Gastrocnemius medialis (tissue), 4 donors: ENCODE measurements at regions of chr14 and their contacts with region 1.

Region 1: DNA sequence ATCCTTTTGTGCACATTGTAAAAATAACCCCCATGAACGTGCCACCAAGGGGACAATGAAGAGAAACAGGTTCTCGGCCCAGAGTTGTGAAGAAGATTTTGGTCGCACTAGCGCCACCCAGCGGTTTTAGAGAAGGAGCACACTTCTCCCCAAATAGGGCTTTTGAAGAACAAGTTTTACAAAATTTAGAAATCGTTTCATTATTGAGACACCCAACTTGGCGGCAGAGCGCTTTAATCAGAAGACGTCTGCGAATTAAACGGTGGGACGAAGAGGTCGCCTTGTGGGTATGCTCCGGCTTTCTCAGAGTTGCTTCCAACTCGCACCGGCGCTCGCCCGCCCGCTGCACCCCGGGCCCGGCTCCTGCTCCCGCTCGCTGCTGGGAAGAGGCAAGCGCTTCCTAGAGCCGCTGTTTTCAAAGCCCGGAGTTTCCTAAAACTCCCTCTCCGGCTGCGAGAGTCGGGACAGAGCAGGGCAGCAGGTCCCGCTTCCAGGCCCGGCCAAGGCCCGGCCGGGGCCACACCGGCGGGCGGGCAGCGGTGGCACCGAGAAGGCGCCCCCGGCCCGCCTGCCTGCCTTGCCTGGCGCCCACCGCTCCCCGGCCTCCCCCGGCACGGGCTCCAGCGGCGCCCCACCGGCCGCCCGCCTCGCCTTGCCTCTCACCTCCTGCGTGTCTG is 673 bp downstream of the FOXA1 start:
- DNase-seq: no peak
- ATAC-seq: peak in 1 of 2 donors; percentile 49
- H3K4me3 ChIP-seq: peak overlapping the region; percentile 19 to 42 (median 26)
- H3K27ac ChIP-seq: no peak overlapping the region
- H3K4me1 ChIP-seq: peaks cover 15 to 24% of the 10 kb centered on the region in 2 donors
- H3K27me3 ChIP-seq: peaks cover 97 to 98% (median 97%) of the 10 kb centered on the region in 3 donors
- CTCF ChIP-seq: peak in 3 of 5 experiments; percentile 35 to 51 (median 37)
- POLR2A ChIP-seq: no peak

Region 2: GRCh38 chr14:36493761-36494160 is 1100.6 kb before region 1 on chr14:
- in situ Hi-C with region 1: no loop called
- intact Hi-C with region 1: loop called (anchors 10 kb)
- DNase-seq: no peak
- ATAC-seq: no peak
- H3K4me3 ChIP-seq: no peak overlapping the region
- H3K27ac ChIP-seq: no peak overlapping the region
- H3K4me1 ChIP-seq: no peaks in the 10 kb centered on the region
- H3K27me3 ChIP-seq: peaks cover 58 to 70% (median 61%) of the 10 kb centered on the region in 3 donors
- CTCF ChIP-seq: no peak
- POLR2A ChIP-seq: no peak

Region 3: GRCh38 chr14:36520601-36521525 is 1073.5 kb before region 1 on chr14:
- in situ Hi-C with region 1: loop called in 1 of 4 experiments (anchors 25 kb)
- intact Hi-C with region 1: no loop called
- DNase-seq: no peak
- ATAC-seq: no peak
- H3K4me3 ChIP-seq: peak overlapping the region; percentile 21 to 57 (median 34)
- H3K27ac ChIP-seq: no peak overlapping the region
- H3K4me1 ChIP-seq: peaks cover 20 to 40% of the 10 kb centered on the region in 2 donors
- H3K27me3 ChIP-seq: peaks cover 96 to 98% (median 98%) of the 10 kb centered on the region in 3 donors
- CTCF ChIP-seq: no peak
- POLR2A ChIP-seq: no peak

Region 4: GRCh38 chr14:36661756-36662498 is 932.4 kb before region 1 on chr14 and contains the start of gene PAX9:
- in situ Hi-C with region 1: loop called in 1 of 4 experiments (anchors 25 kb)
- intact Hi-C with region 1: no loop called
- DNase-seq: peak; percentile 48 to 63
- ATAC-seq: peak; percentile 90 to 92
- H3K4me3 ChIP-seq: peak within 1 kb of the TSS; percentile 27 to 51 (median 44)
- H3K27ac ChIP-seq: no peak within 1 kb of the TSS
- H3K4me1 ChIP-seq: peaks cover 25 to 47% of the 10 kb centered on the region in 2 donors
- H3K27me3 ChIP-seq: peaks cover 96 to 100% (median 100%) of the 10 kb centered on the region in 3 donors
- CTCF ChIP-seq: no peak
- POLR2A ChIP-seq: no peak
- total RNA-seq, gene PAX9: not detected